ENCODE measurements at regions of chr2 and their contacts with region 1.

Region 1: DNA sequence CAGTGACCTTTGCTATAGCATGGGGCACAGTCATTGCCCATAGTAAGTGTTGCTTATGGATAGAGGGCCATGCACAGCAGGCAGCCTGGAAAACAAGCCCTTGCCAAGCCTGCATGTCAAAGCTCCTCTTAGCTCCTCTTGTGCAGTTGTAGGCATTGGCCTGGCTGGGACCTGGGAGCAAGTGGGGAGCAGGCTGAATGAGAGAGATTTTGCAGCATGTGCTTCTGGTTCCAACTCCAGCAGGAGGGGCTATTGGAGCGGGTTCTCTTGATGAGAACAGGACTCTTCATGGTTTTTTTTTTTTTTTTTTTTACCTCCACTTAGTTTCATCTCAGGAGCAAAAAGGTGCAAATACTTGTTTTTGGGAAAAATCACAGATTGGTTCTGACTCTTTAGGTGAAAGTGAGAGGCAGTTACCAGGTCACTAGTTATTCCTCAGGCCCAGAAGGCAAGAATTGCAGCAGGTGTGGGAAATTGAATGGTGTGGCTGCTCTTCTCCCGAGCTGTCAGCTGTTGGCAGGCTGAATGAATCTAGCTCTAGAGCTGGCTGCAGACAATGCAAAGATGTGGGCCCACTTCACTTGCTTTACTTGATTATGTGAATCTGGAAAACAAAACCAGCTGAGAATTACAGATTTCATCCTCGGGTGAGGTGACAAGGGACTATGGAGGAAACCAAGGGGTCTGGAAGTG is 95.9 kb downstream of the MAP4K4 start:
- DNase-seq: peak; percentile 61
- ATAC-seq: peak; percentile 98
- H3K4me3 Mint-ChIP-seq: no peak overlapping the region
- H3K27ac Mint-ChIP-seq: no peak overlapping the region
- H3K4me1 Mint-ChIP-seq: peaks cover 27% of the 10 kb centered on the region
- H3K27me3 Mint-ChIP-seq: no peaks in the 10 kb centered on the region
- CTCF ChIP-seq: no peak

Region 2: DNA sequence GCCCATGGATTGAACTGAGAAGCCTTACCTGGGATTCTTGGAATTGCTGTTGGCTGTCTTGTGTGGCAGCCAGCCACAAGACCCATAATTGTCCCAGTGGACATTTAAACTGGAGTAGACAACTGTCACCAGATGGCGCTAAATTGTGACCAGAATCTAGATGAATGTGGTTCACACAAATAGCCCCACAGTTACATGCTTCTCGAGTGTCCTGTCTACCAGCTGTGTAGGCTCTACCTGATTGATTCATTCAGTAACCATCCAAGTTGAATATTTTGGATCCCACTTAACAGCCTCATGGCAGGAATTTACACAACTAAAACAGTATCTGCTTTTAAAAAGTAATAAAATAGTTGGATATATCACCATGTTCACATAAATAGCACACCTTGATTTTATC is 22.7 kb before region 1 on chr2:
- CTCF ChIA-PET with region 1: interaction called, 19 read pairs
- POLR2A ChIA-PET with region 1: no interaction called
- DNase-seq: no peak
- ATAC-seq: no peak; the same call in 1 of the 2 replicates
- H3K4me3 Mint-ChIP-seq: no peak overlapping the region
- H3K27ac Mint-ChIP-seq: peak overlapping the region; percentile 71; the same call in 1 of the 2 replicates
- H3K4me1 Mint-ChIP-seq: peaks cover 88% of the 10 kb centered on the region
- H3K27me3 Mint-ChIP-seq: no peaks in the 10 kb centered on the region
- CTCF ChIP-seq: no peak

Region 3: GRCh38 chr2:101776172-101777043 is 17.0 kb before region 1 on chr2:
- CTCF ChIA-PET with region 1: interaction called, 19 read pairs
- POLR2A ChIA-PET with region 1: interaction called, 3 read pairs
- DNase-seq: peak; percentile 49
- ATAC-seq: peak; percentile 67
- H3K4me3 Mint-ChIP-seq: no peak overlapping the region
- H3K27ac Mint-ChIP-seq: no peak overlapping the region
- H3K4me1 Mint-ChIP-seq: peaks cover 90% of the 10 kb centered on the region
- H3K27me3 Mint-ChIP-seq: no peaks in the 10 kb centered on the region
- CTCF ChIP-seq: no peak

Region 4: DNA sequence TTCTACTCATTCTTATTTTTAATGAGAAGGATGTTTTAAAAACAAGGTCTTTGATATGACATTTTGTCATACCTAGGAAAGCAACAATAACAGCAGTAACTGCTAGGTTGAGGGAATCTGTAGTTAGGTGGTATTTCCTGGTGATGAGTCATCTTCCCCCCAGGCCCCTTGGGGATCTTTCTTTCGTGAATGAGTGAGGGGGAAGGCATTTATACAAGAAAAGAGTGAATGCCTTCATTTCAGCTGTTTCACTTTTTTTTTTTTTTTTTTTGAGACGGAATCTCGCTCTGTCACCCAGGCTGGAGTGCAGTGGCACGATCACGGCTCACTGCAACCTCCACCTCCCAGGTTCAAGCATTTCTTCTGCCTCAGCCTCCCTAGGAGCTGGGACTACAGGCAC is 12.7 kb after region 1 on chr2:
- CTCF ChIA-PET with region 1: interaction called, 12 read pairs
- POLR2A ChIA-PET with region 1: no interaction called
- DNase-seq: no peak
- ATAC-seq: peak; percentile 40
- H3K4me3 Mint-ChIP-seq: peak overlapping the region; percentile 8; the same call in 1 of the 2 replicates
- H3K27ac Mint-ChIP-seq: peak overlapping the region; percentile 93
- H3K4me1 Mint-ChIP-seq: peaks cover 76% of the 10 kb centered on the region
- H3K27me3 Mint-ChIP-seq: no peaks in the 10 kb centered on the region
- CTCF ChIP-seq: no peak

Region 5: GRCh38 chr2:101823347-101823791 is 29.9 kb after region 1 on chr2:
- CTCF ChIA-PET with region 1: interaction called, 12 read pairs
- POLR2A ChIA-PET with region 1: no interaction called
- DNase-seq: peak; percentile 71
- ATAC-seq: peak; percentile 94
- H3K4me3 Mint-ChIP-seq: no peak overlapping the region
- H3K27ac Mint-ChIP-seq: no peak overlapping the region
- H3K4me1 Mint-ChIP-seq: peaks cover 32% of the 10 kb centered on the region
- H3K27me3 Mint-ChIP-seq: no peaks in the 10 kb centered on the region
- CTCF ChIP-seq: peak; percentile 56

Region 6: DNA sequence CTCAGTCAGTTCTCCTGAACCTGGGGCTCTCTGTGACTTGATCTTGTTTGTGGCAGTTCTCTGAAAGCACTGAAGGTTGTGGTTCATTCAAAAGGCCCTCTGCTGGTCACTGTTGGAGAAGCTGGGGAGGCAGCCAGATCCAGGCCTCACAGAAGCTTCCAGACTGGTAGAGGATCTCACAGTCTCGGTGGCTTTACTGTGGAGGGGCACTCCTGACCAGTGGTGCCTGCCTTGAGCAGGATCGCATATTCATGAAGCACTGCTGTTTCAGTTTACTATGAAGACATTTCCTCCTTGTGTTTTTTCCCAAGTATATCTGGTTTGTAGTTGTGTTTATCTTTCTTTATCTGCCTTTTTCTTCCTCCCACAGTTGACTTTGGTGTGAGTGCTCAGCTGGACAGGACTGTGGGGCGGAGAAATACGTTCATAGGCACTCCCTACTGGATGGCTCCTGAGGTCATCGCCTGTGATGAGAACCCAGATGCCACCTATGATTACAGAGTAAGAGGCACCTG is 38.0 kb after region 1 on chr2:
- CTCF ChIA-PET with region 1: interaction called, 17 read pairs
- POLR2A ChIA-PET with region 1: no interaction called
- DNase-seq: peak; percentile 79
- ATAC-seq: peak; percentile 98
- H3K4me3 Mint-ChIP-seq: no peak overlapping the region
- H3K27ac Mint-ChIP-seq: peak overlapping the region; percentile 75
- H3K4me1 Mint-ChIP-seq: peaks cover 15% of the 10 kb centered on the region
- H3K27me3 Mint-ChIP-seq: no peaks in the 10 kb centered on the region
- CTCF ChIP-seq: peak; percentile 48; the same call in 1 of the 2 replicates

Region 7: GRCh38 chr2:102033031-102033749 is 239.8 kb after region 1 on chr2:
- CTCF ChIA-PET with region 1: no interaction called
- POLR2A ChIA-PET with region 1: no interaction called
- DNase-seq: no peak
- ATAC-seq: no peak
- H3K4me3 Mint-ChIP-seq: no peak overlapping the region
- H3K27ac Mint-ChIP-seq: no peak overlapping the region
- H3K4me1 Mint-ChIP-seq: peaks cover 15% of the 10 kb centered on the region
- H3K27me3 Mint-ChIP-seq: peaks cover 3% of the 10 kb centered on the region
- CTCF ChIP-seq: no peak

Measured in WTC11 (cell line).